GM10248 (cell line): ENCODE measurements at regions of chr13 and their contacts with region 1.

Region 1: DNA sequence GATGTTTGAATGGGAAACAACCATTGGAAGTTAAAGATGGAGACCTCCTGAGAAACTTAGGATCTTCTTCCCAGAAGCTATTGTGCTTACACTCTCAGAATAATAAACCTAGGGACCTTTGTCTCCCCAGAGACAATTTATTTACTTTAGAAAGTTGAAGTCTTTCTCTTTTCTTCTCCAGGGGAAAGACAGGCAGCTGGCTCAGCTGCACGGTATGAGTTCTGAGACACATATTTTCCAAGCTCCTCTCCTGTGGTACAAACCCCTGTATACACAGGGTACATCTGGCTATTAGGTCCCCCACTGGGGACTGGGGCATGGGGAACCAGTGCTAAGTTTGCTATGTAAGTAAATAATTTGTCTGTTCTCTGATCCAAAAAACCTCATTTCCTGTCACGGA is 67.5 kb upstream of the POSTN start:
- DNase-seq: no peak
- CTCF ChIP-seq: no peak

Region 2: DNA sequence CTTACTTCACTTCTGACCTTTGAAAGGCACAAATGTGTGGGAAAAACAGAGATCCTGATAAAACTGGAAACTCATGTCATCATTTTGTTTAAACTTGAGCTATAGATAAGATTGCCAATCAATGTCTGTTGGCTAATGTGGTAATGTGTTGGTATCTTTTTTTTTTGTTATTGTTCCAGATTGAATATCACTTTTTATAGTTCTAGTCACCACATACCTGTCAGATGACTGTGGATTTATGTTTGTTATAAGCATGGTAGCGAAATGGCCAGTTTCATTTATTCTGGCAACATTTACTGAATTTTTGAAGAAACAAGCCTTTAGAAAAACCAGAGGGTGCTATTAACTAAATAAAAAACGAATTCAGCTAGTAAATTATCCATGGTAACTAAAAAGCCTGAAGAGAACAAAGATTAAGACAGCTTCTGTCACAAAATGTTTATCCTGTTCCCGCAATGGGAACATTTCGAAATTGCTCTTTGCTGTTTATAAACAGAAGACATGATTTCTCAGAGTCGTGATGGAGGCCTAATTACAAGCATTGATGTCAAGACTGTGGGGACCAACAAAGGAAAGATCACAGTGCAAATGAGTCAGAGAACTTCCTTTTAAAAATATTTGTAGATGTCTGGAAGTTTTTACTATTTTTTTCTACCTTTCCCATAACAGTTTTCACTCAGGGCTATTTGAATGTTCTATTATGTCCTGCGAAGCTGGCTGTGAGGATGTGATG is 15.4 kb after region 1 on chr13:
- CTCF ChIA-PET with region 1: interaction called, 12 read pairs
- POLR2A ChIA-PET with region 1: no interaction called
- DNase-seq: no peak
- CTCF ChIP-seq: no peak